Mucosa of descending colon (tissue), 3 donors: ENCODE measurements at regions of chr21 and their contacts with region 1.

Region 1: GRCh38 chr21:14877570-14878228 is 187.1 kb downstream of the NRIP1 start:
- DNase-seq: peak in 1 of 3 donors; percentile 14
- ATAC-seq: peak; percentile 70
- H3K4me3 ChIP-seq: no peak overlapping the region
- H3K4me1 ChIP-seq: peaks cover 19% of the 10 kb centered on the region
- CTCF ChIP-seq: no peak

Region 2: GRCh38 chr21:14602382-14602958 is 275.2 kb before region 1 on chr21:
- intact Hi-C with region 1: no loop called
- DNase-seq: peak in 1 of 3 donors; percentile 34
- ATAC-seq: peak; percentile 67
- H3K4me3 ChIP-seq: no peak overlapping the region
- H3K4me1 ChIP-seq: no peaks in the 10 kb centered on the region
- CTCF ChIP-seq: no peak

Region 3: GRCh38 chr21:15015622-15016471 is 138.1 kb after region 1 on chr21:
- intact Hi-C with region 1: no loop called
- DNase-seq: no peak
- ATAC-seq: no peak
- H3K4me3 ChIP-seq: no peak overlapping the region
- H3K4me1 ChIP-seq: no peaks in the 10 kb centered on the region
- CTCF ChIP-seq: no peak

Region 4: DNA sequence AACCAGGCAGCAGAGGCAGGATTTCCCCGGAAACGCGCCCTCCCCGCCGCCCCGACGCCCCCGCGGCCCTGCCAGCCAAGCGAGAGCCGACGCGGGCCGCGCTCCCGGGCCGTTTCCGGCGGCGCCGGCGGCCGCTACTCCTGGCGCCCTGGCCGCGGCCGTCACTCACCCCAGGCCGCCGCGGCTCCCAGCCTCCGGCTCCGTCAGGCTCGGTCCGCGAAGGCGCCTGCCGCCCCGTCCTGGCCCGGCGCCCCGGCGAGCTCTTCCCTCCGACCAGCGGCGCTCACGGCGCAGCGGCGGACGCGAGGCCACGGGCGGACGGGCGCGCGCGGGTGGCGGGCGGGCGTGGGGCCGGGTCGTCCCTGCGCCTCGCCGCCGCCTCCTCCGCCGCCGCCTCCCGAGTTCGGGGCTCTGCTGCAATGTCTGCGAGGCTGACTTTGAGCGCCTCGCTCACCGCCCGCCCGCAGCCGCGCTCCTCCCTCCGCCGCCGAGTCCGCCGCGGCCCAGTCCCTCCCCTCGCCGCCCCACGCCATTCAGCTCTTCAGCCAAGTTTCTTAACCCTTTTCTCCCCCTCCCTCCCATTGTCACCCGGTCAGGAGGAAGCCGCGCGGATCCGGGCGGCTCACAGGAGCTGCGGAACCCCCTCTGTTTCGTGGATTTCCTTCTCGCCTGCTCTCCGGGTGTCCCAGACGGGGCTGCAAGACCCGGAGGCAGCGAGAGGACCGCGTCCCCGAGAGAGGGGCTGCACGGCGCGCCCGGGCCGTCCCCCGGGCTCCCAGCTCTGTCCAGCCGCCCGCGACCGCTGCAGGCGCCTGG is 187.1 kb after region 1 on chr21 and contains the start of gene NRIP1:
- intact Hi-C with region 1: loop called in 1 of 2 experiments (anchors 10 kb)
- DNase-seq: peak; percentile 91 to 94 (median 94)
- ATAC-seq: peak; percentile 90
- H3K4me3 ChIP-seq: peak within 1 kb of the TSS; percentile 77
- H3K4me1 ChIP-seq: peaks cover 19% of the 10 kb centered on the region
- CTCF ChIP-seq: no peak
- total RNA-seq, gene NRIP1: 64.3 to 91.8 (median 77.1) TPM

Region 5: GRCh38 chr21:15140321-15141019 is 262.8 kb after region 1 on chr21:
- intact Hi-C with region 1: no loop called
- DNase-seq: peak; percentile 82 to 93 (median 83)
- ATAC-seq: peak; percentile 97
- H3K4me3 ChIP-seq: no peak overlapping the region
- H3K4me1 ChIP-seq: peaks cover 43% of the 10 kb centered on the region
- CTCF ChIP-seq: no peak